ENCODE measurements at regions of chr11 and their contacts with region 1.

Region 1: GRCh38 chr11:123741159-123742028 is at the start of gene ZNF202:
- DNase-seq: peak; percentile 81 to 95 (median 89)
- ATAC-seq: peak; percentile 93
- H3K4me3 ChIP-seq: peak within 1 kb of the TSS; percentile 98
- H3K4me3 Mint-ChIP-seq: peak within 1 kb of the TSS; percentile 97
- H3K27ac ChIP-seq: peak within 1 kb of the TSS; percentile 33 to 61
- H3K27ac Mint-ChIP-seq: peak within 1 kb of the TSS; percentile 86
- H3K4me1 ChIP-seq: peaks cover 19% of the 10 kb centered on the region
- H3K4me1 Mint-ChIP-seq: peaks cover 45% of the 10 kb centered on the region
- H3K27me3 ChIP-seq: no peaks in the 10 kb centered on the region
- H3K27me3 Mint-ChIP-seq: peaks cover 11% of the 10 kb centered on the region
- CTCF ChIP-seq: no peak
- total RNA-seq, gene ZNF202: 6.8 to 8.0 TPM

Region 2: DNA sequence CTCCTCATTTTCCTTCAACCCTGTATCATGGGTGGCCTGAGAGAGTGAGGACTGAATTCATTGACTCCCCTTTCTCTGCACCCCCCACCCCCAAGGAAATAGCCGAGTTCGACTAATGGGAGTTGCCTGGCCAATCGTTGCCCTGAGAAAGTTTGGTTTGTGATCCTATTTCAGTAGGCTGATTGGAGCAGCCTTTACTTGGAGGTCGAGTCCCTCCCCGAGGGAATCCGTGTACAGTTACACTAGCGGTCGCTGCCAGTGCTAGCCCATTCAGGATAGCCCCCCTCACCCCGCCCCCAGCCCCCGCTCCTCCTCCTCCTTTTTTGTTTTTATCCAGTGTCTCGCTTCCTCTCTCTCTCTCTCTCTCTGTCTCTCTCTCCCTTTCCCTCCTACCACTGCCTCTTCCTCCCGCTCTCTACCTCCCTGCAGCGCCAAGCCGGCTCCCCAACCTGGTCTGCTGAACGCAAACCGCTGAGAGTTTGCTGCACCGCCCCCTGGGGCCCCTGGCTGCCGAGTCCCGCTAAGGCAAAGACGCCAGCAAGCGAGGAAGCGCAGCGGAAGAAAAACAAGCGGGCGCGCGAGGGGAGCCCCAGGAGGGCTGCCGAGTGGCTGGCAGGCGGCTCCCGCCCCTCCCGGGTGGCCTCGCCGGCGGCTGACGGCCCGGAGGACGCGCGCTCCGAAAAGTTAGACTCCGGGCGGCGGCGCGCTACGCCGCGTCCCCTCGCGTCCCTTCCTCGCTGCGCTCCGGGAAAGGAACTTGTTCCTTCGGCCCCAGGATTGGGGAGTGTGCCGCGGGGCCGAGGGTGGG is 311.3 kb before region 1 on chr11 and contains the start of gene GRAMD1B:
- CTCF ChIA-PET with region 1: no interaction called
- POLR2A ChIA-PET with region 1: no interaction called
- intact Hi-C with region 1: loop called in 1 of 2 experiments (anchors 10 kb)
- DNase-seq: peak; percentile 66 to 88 (median 78)
- ATAC-seq: peak; percentile 85
- H3K4me3 ChIP-seq: peak within 1 kb of the TSS; percentile 74
- H3K4me3 Mint-ChIP-seq: peak within 1 kb of the TSS; percentile 96
- H3K27ac ChIP-seq: peak within 1 kb of the TSS; percentile 6 to 42
- H3K27ac Mint-ChIP-seq: peak within 1 kb of the TSS; percentile 76
- H3K4me1 ChIP-seq: peaks cover 24% of the 10 kb centered on the region
- H3K4me1 Mint-ChIP-seq: peaks cover 28% of the 10 kb centered on the region
- H3K27me3 ChIP-seq: no peaks in the 10 kb centered on the region
- H3K27me3 Mint-ChIP-seq: no peaks in the 10 kb centered on the region
- CTCF ChIP-seq: no peak
- total RNA-seq, gene GRAMD1B: 16.1 to 21.8 TPM

Region 3: DNA sequence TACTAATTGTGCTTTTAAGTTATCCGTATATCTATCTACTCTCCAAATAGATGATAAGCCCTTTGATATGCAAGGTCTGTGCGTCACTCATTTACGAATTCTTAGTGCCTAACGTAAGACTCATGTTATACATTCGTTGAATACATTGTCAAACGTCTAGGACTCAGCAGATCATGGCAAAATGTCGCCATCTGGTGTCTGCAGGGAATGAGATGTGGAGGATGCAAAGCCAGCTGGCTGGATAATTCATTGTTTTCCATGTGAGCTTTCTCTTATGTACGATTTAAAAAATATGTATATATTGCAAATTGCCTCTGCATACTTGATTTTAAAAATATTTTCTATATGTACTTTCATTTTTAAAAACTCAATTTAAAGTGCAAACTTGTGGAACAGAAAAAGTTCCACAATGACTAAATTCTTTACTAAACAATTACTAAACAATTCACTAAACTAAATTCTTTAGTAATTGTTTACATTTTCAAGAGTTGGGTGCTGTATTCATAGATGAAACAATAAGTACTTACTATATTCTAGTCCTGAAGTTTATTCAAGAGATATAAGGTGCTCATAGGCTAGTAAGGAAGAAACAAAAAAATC is 33.7 kb before region 1 on chr11:
- CTCF ChIA-PET with region 1: no interaction called
- POLR2A ChIA-PET with region 1: no interaction called
- intact Hi-C with region 1: no loop called
- DNase-seq: peak; percentile 21 to 77 (median 54)
- ATAC-seq: peak; percentile 78
- H3K4me3 ChIP-seq: no peak overlapping the region
- H3K4me3 Mint-ChIP-seq: no peak overlapping the region
- H3K27ac ChIP-seq: no peak overlapping the region
- H3K27ac Mint-ChIP-seq: no peak overlapping the region
- H3K4me1 ChIP-seq: no peaks in the 10 kb centered on the region
- H3K4me1 Mint-ChIP-seq: no peaks in the 10 kb centered on the region
- H3K27me3 ChIP-seq: no peaks in the 10 kb centered on the region
- H3K27me3 Mint-ChIP-seq: peaks cover 14% of the 10 kb centered on the region
- CTCF ChIP-seq: peak; percentile 76

Region 4: DNA sequence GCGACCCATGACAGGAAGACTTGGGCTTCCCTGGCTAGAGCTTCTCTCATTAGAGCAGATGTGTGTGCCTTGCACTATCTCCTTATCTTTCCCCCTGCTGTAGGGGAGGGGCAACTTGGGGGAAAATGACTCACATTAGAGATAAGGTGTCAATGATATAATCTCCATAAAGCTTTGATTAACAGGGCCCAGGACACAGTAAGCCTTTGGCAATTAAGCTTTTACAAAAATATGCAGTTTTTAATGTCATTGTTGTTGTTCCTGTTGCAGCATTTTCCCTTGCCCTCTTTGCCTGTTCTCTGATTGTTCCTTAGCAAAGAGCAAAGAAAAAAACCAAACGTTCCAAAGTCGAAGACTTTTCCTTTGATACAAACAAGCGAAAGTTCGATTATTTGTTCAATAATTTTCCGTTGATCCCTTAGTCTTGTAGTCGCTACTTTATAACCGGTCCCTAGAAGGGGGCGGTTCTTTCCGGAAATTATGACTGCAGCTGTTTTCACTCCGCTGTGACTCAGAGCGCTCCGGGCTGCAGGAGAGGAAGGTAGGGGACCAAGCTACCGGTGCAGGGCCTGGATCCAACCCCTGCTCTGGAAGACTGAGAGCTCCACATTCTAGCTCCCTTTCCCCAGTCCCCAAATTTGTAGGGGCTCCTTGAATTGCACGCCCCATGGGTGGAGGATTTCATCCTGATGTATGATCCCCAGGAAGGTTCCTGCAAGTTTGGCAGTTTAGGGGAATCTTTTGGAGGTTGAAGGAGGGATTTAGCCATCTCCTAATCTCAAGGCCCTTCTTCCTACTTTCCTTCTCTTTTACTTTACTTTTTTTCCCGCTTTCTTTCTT is 373.8 kb after region 1 on chr11 and contains the start of gene VWA5A:
- CTCF ChIA-PET with region 1: no interaction called
- POLR2A ChIA-PET with region 1: no interaction called
- intact Hi-C with region 1: loop called in 1 of 2 experiments (anchors 10 kb)
- DNase-seq: peak; percentile 38 to 78 (median 67)
- ATAC-seq: peak; percentile 99
- H3K4me3 ChIP-seq: peak within 1 kb of the TSS; percentile 73
- H3K4me3 Mint-ChIP-seq: peak within 1 kb of the TSS; percentile 94
- H3K27ac ChIP-seq: no peak within 1 kb of the TSS
- H3K27ac Mint-ChIP-seq: peak within 1 kb of the TSS; percentile 77
- H3K4me1 ChIP-seq: peaks cover 8% of the 10 kb centered on the region
- H3K4me1 Mint-ChIP-seq: peaks cover 32% of the 10 kb centered on the region
- H3K27me3 ChIP-seq: no peaks in the 10 kb centered on the region
- H3K27me3 Mint-ChIP-seq: peaks cover 8% of the 10 kb centered on the region
- CTCF ChIP-seq: no peak
- total RNA-seq, gene VWA5A: 5.1 to 5.6 TPM

Measured in CD4-positive, alpha-beta T cell (primary cell).